Calu3 (cell line): ENCODE measurements at regions of chr7 and their contacts with region 1.

Region 1: DNA sequence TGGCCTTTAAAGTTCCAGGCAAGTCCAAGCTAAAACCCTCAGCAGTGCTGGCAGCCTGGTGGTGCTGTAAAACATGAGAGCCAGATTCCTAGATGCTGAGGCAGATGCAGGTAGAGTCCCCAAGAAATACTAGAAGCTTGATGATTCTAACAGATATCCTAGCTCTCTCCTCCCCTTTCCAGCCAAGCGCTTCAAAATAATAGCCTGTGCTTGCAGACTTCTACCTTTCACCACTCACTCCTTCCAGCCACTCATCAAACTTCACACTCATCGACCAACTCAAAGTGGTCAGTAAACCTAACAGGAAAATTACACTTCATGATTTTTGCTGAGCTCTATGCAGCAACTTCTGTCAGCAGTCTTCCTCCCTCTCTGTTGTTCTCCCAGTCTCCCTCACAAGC is 50.2 kb downstream of the LMBR1 start:
- DNase-seq: no peak
- H3K4me3 Mint-ChIP-seq: no peak overlapping the region
- H3K27ac Mint-ChIP-seq: no peak overlapping the region
- H3K4me1 Mint-ChIP-seq: peaks cover 7% of the 10 kb centered on the region
- H3K27me3 Mint-ChIP-seq: no peaks in the 10 kb centered on the region
- CTCF ChIP-seq: no peak

Region 2: GRCh38 chr7:156207306-156207705 is 635.4 kb before region 1 on chr7:
- CTCF ChIA-PET with region 1: interaction called, 10 read pairs
- intact Hi-C with region 1: no loop called
- DNase-seq: no peak
- H3K4me3 Mint-ChIP-seq: no peak overlapping the region
- H3K27ac Mint-ChIP-seq: no peak overlapping the region
- H3K4me1 Mint-ChIP-seq: no peaks in the 10 kb centered on the region
- H3K27me3 Mint-ChIP-seq: peaks cover 36% of the 10 kb centered on the region
- CTCF ChIP-seq: no peak

Region 3: GRCh38 chr7:156236181-156236889 is 606.4 kb before region 1 on chr7:
- CTCF ChIA-PET with region 1: no interaction called
- intact Hi-C with region 1: no loop called
- DNase-seq: no peak
- H3K4me3 Mint-ChIP-seq: no peak overlapping the region
- H3K27ac Mint-ChIP-seq: no peak overlapping the region
- H3K4me1 Mint-ChIP-seq: no peaks in the 10 kb centered on the region
- H3K27me3 Mint-ChIP-seq: peaks cover 36% of the 10 kb centered on the region
- CTCF ChIP-seq: no peak

Region 4: DNA sequence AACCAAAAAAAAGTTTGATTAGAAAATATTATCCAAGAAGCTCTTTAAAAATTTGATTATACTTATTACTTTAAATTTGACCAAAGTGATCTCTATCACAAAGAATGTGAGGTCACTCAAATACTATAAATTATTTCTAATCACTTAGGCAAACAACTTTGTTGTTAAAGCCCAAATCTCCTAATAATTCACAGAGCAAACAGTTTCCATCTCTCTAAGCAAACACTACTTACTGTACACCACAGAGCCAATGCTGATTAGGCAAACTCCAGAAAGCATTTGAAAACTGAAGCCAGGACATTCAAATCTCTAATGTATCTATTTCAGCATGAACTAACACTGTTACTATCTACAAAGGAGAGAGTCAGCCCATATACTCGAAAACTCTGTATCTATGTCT is 95.0 kb before region 1 on chr7:
- CTCF ChIA-PET with region 1: no interaction called
- intact Hi-C with region 1: no loop called
- DNase-seq: no peak
- H3K4me3 Mint-ChIP-seq: no peak overlapping the region
- H3K27ac Mint-ChIP-seq: no peak overlapping the region
- H3K4me1 Mint-ChIP-seq: no peaks in the 10 kb centered on the region
- H3K27me3 Mint-ChIP-seq: no peaks in the 10 kb centered on the region
- CTCF ChIP-seq: no peak

Region 5: DNA sequence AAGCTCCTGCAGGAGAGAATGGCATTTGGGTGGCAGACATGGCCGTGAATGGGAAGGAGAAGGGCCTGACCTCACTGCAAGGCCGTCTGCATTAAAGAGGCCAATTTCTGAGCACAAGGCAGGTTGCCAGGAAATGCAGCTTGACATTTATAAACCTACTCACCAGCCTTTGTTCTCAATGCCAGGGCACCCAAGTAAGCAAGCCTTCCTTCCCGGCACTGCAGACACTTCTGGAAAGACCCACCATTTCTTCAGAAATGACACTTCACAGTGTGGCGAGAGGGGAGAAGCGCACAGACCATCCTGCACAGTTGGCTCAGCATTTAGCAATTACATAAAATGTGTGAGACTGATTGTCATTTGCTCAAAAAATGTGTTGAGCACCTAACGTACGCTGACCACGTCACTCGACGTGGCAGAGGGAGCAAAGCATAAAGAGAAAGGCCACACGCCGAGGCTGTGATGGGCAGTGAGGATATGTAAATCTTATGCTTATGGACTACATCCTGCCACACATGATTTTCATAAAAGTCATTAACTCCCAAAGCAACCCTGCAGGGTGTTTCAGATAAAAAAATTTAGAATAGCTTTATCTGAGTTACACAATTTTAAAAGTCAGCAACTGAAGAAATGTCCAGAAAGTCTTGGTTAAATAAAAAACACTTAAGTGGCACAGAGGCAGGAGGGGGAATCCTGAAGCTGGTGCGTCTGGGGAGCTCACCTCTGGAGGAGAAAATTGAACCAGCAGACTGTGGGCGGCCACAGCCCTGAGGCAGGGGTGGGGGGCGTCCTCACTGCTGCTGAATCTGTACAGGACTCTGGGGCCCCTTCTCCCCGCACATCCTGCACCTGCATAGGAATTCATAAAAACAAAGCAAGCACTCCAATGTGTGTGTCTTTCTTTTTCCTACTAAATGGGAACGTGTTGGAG is 1201.1 kb after region 1 on chr7:
- CTCF ChIA-PET with region 1: no interaction called
- intact Hi-C with region 1: no loop called
- DNase-seq: no peak
- H3K4me3 Mint-ChIP-seq: no peak overlapping the region
- H3K27ac Mint-ChIP-seq: no peak overlapping the region
- H3K4me1 Mint-ChIP-seq: no peaks in the 10 kb centered on the region
- H3K27me3 Mint-ChIP-seq: no peaks in the 10 kb centered on the region
- CTCF ChIP-seq: no peak